OCI-LY7 (cell line): ENCODE measurements at regions of chr7 and their contacts with region 1.

Region 1: GRCh38 chr7:81469869-81470723 is 299.8 kb downstream of the HGF start:
- DNase-seq: peak; percentile 45
- H3K4me3 ChIP-seq: no peak overlapping the region
- H3K27ac ChIP-seq: no peak overlapping the region
- H3K4me1 ChIP-seq: no peaks in the 10 kb centered on the region
- CTCF ChIP-seq: peak; percentile 79

Region 2: DNA sequence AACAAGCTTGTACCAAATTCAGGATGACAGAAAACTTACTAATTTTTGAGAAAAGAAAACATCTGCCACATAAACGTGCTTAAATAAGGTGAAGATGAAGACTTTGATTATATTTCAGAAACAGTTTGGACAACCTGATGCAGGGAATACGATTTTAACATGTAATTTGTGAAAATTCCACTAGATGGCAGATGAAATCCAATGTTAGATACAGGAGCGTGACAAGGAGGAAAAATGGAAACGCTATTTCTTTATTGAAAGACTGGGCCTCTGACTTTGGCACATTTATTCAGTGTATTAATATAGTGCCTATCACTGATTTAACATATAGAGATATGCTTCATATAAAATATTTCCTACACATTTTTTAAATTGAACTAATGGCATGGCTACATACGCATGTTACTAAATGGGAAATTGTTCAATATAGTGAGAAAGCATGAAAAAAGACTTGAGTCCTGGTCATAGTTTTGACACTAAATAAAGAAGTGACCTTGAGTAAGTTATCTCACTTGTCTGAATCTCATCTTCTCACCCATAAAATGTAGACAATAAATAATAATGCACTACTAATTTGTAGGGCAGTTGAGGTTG is 771.0 kb before region 1 on chr7:
- CTCF ChIA-PET with region 1: interaction called, 3 read pairs
- POLR2A ChIA-PET with region 1: no interaction called
- intact Hi-C with region 1: loop called (anchors 1 kb)
- DNase-seq: peak; percentile 41
- H3K4me3 ChIP-seq: no peak overlapping the region
- H3K27ac ChIP-seq: no peak overlapping the region
- H3K4me1 ChIP-seq: peaks cover 4% of the 10 kb centered on the region
- CTCF ChIP-seq: peak; percentile 82

Region 3: GRCh38 chr7:81367335-81367931 is 102.7 kb before region 1 on chr7:
- CTCF ChIA-PET with region 1: no interaction called
- POLR2A ChIA-PET with region 1: no interaction called
- intact Hi-C with region 1: no loop called
- DNase-seq: no peak
- H3K4me3 ChIP-seq: no peak overlapping the region
- H3K27ac ChIP-seq: no peak overlapping the region
- H3K4me1 ChIP-seq: no peaks in the 10 kb centered on the region
- CTCF ChIP-seq: no peak